HepG2 (cell line): ENCODE measurements at regions of chr19 and their contacts with region 1.

Region 1: DNA sequence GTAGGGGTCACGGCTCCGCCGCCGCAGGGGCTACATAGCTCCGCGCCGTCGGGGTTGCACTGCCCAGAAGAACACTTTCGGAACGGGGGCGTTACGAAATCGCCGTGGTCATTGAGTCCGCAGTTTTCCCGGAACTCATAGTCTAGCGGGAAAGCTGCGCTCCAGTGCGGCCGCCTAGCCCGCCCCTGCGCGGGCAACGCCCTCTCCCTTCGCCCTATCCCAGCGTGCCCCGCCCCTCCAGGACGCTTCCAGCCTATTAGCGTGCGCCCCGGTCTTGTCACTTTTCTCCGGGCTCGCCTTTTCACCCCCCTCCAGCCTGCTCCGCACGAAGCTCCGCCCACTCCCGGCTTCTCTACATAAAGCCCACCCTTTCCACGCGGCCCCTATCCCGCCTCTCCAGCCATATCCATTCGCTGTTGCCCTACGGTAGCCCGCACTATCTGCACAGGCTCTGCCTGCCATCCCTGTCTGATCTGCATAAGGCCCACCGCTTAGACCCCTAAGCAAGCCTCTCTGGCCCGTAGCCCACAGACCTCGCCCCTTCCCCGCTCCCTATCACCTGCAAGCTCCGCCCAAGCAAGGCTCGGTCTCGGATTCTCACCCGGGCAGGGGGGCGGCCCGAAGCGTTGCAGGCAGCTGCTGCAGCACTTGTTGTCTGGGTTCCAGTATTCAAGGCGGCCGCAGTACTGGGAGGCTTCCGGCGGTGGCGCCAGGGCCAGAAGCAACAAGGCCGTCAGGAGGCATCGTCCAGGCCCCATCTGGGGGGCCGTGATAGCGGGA is 1.6 kb downstream of the IGFLR1 start:
- DNase-seq: peak; percentile 96
- ATAC-seq: peak; percentile 84
- H3K4me3 ChIP-seq: peak overlapping the region; percentile 65 to 84 (median 80)
- H3K27ac ChIP-seq: peak overlapping the region; percentile 89
- H3K4me1 ChIP-seq: peaks cover 29% of the 10 kb centered on the region
- H3K27me3 ChIP-seq: no peaks in the 10 kb centered on the region; a peak in 1 of 5 replicates
- CTCF ChIP-seq: peak; percentile 61
- EP300 ChIP-seq: peak in 1 of 2 experiments; percentile 29; a peak in 1 of 4 replicates
- POLR2A ChIP-seq: peak; percentile 73 to 90
- RAD21 ChIP-seq: 0 out of 2 replicates have a peak, but pooled peaks have one; percentile 46

Region 2: DNA sequence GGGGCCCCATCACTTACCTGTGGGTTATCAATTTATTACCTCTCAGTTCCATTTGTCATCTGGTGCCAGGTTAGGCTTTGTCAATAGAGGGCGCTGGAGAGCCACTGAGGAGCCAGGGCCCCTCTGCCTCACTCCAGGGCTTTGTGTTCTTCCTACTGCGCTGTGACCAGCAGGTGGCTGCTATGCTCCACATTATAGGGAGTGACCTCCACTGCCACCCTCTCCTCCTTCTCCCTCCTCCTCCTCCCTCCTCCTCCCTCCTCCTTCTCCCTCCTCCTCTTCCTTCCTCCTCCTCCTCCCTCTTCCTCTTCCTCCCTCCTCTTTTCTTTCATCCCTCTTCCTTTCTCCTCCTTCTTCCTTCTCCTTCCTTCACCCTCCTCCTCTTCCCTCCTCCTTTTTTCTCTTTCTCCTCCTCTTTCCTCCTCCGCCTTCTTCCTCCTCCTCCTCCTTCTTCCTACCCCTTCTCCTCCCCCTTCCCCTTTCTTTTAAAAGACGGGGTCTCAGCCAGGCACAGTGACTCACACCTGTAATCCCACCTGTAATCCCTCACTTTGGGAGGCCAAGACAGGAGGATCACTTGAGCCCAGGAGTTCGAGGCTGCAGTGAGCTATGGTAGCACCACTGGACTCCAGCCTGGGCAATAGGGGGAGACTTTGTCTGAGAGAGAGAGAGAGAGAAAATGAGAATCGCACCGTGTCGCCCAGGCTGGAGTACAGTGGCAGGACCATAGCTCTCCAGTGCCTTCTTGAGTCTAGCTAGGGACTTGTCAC is 46.6 kb before region 1 on chr19:
- CTCF ChIA-PET with region 1: interaction called, 5 read pairs
- POLR2A ChIA-PET with region 1: interaction called, 4 read pairs
- in situ Hi-C with region 1: no loop called
- intact Hi-C with region 1: loop called (anchors 10 kb)
- DNase-seq: peak; percentile 81
- ATAC-seq: peak; percentile 96
- H3K4me3 ChIP-seq: no peak overlapping the region
- H3K27ac ChIP-seq: no peak overlapping the region
- H3K4me1 ChIP-seq: peaks cover 32% of the 10 kb centered on the region
- H3K27me3 ChIP-seq: no peaks in the 10 kb centered on the region
- CTCF ChIP-seq: peak; percentile 97
- EP300 ChIP-seq: no peak
- POLR2A ChIP-seq: no peak
- RAD21 ChIP-seq: peak; percentile 98

Region 3: DNA sequence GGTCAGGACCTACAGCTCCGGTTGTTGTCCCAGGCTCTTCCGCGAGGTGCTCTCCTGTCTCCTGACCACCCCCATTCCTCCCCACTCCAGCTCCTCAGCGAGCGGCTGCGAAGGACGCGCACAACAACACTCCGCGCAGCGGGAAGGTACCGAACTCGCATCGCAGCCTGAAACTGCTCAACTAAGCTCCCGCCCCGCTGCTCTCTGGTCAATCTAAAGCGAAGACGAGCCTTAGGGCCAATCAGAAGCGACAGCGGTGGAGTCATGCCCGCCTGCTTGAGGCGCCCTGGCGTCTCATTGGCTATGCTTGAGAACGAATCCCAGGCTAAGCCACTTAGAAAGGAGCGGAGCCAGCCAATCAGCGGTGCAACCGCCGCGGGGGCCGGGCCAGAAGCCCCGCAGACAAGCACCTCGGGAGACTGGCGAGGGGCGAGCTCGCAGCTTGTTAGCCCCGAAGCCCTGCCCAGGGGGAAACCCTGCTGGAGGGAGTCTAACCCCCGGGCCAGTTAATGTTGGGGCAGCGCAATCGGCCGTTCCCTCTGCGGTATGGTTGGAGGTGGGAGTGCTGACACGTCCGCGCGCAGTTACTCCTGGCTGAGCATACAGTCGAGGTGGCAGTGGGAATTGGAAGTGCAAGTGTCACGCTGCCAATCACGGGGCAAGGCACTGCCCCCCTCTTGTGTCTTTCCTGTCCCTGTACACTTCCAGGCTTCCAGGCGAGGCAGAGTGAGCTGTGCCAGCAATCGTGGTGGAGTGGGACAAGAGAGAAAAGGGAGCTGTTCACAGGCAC is 38.2 kb before region 1 on chr19:
- CTCF ChIA-PET with region 1: no interaction called
- POLR2A ChIA-PET with region 1: interaction called, 12 read pairs
- in situ Hi-C with region 1: no loop called
- intact Hi-C with region 1: loop called (anchors 10 kb)
- DNase-seq: peak; percentile 96
- ATAC-seq: peak; percentile 99
- H3K4me3 ChIP-seq: peak overlapping the region; percentile 50 to 77 (median 70)
- H3K27ac ChIP-seq: peak overlapping the region; percentile 56
- H3K4me1 ChIP-seq: peaks cover 29% of the 10 kb centered on the region
- H3K27me3 ChIP-seq: no peaks in the 10 kb centered on the region
- CTCF ChIP-seq: peak; percentile 22; the same call in 1 of the 2 replicates
- EP300 ChIP-seq: no peak
- POLR2A ChIP-seq: peak in 1 of 2 experiments; percentile 79; a peak in 2 of 4 replicates
- RAD21 ChIP-seq: no peak

Region 4: DNA sequence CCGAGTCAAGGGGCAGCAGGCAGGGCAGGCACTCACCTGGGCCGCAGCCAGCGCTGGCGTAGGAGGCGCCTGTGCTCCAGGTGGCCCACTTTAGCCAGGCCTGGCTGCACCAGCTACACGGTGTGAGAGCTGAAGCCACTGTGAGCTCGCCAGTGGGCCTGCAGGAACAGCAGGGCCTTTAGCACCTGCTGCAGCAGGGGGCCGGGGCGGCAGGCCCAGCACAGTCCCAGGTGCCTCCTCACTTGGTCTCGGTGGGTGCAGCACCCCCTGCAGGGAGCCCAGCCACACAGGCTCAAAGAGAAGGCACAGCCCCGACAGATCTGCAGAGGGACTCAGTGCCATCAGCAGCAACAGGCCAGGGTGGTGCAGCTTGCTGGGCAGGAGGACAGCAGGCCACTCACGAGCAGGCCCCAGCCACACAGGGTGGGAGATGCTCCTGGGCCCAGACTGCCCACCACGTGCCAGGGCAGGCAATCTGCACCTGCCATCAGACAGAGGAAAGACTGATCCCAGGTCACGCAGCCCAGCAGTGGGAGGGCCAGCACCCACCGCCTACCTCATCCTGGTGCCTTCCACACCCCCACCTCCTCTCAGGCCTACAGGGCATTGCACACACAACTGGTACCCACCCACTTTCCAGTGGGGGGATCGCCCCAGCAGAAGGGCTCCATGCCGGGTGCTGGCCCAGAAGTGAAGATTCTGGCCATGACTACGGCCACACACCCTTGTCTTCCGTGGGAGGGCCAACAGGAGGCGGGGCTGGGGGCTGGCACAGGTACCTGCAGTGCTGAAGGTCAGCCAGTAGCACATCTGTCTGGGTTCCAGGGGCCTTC is 50.6 kb after region 1 on chr19:
- CTCF ChIA-PET with region 1: no interaction called
- POLR2A ChIA-PET with region 1: interaction called, 4 read pairs
- in situ Hi-C with region 1: no loop called
- intact Hi-C with region 1: loop called (anchors 1 kb)
- DNase-seq: peak; percentile 40
- ATAC-seq: peak; percentile 84
- H3K4me3 ChIP-seq: peak overlapping the region in 2 of 3 experiments; percentile 13 to 34; a peak in 1 of 6 replicates
- H3K27ac ChIP-seq: no peak overlapping the region
- H3K4me1 ChIP-seq: peaks cover 36% of the 10 kb centered on the region
- H3K27me3 ChIP-seq: peaks cover 0 to 4% of the 10 kb centered on the region in 2 experiments; a peak in 3 of 5 replicates
- CTCF ChIP-seq: peak; percentile 84
- EP300 ChIP-seq: no peak
- POLR2A ChIP-seq: no peak
- RAD21 ChIP-seq: peak; percentile 71

Region 5: GRCh38 chr19:35845215-35846037 is 104.8 kb after region 1 on chr19:
- CTCF ChIA-PET with region 1: no interaction called
- POLR2A ChIA-PET with region 1: no interaction called
- in situ Hi-C with region 1: no loop called
- intact Hi-C with region 1: no loop called
- DNase-seq: peak; percentile 37
- ATAC-seq: peak; percentile 76
- H3K4me3 ChIP-seq: peak overlapping the region; percentile 33 to 73 (median 49); a peak in 5 of 6 replicates
- H3K27ac ChIP-seq: no peak overlapping the region
- H3K4me1 ChIP-seq: peaks cover 27% of the 10 kb centered on the region
- H3K27me3 ChIP-seq: peaks cover 0 to 41% of the 10 kb centered on the region in 2 experiments
- CTCF ChIP-seq: 0 out of 2 replicates have a peak, but pooled peaks have one; percentile 5
- EP300 ChIP-seq: no peak
- POLR2A ChIP-seq: no peak
- RAD21 ChIP-seq: no peak

Region 6: DNA sequence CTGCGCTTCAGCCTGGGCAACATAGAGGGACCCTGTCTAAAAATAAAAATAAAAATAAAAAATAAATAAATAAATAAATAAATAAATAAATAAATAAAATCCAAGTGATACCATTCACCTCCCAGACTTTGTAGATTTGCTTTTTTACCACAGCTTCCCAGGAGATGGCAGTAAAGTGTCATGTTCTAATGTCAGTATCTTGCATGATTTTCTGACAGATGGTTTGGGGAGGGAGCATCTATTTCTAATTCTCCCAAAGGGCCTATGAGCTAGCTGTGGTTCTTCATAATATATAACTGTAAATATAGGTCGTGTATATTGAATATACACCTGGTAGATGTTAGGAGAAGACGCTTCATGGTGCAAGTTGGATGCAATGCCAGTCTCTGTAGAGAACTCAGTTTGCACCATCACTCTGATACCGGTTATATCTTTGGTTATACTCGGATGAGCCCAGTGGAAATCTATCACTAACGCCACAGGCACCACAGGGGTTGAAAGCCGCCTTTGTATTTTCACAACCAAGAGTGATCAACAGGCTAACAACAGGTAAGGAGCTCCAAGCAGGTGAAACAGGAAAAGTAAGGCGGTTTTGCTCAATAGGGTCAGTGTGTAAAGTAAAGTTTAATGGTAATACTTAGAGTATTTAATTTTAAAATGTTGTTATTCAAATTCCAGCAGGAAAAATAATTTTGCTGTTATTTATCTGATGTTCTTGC is 141.7 kb after region 1 on chr19:
- CTCF ChIA-PET with region 1: no interaction called
- POLR2A ChIA-PET with region 1: no interaction called
- in situ Hi-C with region 1: no loop called
- intact Hi-C with region 1: no loop called
- DNase-seq: peak; percentile 64
- ATAC-seq: no peak
- H3K4me3 ChIP-seq: no peak overlapping the region
- H3K27ac ChIP-seq: no peak overlapping the region
- H3K4me1 ChIP-seq: no peaks in the 10 kb centered on the region
- H3K27me3 ChIP-seq: no peaks in the 10 kb centered on the region
- CTCF ChIP-seq: peak; percentile 67
- EP300 ChIP-seq: no peak
- POLR2A ChIP-seq: no peak
- RAD21 ChIP-seq: 0 out of 2 replicates have a peak, but pooled peaks have one; percentile 17